ENCODE measurements at regions of chr15 and their contacts with region 1.

Region 1: DNA sequence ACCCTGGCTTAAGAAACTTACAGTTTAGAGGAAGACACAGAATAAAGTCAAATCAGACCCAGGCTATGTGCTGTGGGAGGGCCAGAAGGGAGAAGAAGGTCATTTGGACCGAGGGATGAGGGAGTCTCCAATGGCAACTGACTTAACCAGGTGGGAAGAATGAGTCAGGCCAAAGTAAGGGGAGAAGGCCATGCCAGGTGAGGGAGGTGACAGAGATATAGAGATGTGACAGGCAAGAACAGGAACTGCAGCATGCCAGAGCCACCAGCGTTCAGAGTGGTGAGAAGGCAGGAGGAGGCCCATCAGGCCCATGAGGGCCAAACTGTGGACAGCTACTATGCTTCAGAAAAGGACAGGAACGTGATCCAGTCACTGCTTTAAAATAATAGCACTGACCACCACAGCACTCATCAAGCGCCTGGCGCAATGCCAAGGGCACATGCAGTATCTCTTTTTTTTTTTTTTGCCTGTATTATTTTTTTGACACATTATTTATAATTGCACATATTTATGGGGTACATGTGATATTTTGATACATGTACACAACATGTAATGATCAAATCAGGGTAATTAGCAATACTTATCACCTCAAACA is 154.3 kb upstream of the IGF1R start:
- DNase-seq: no peak
- H3K4me3 ChIP-seq: no peak overlapping the region
- H3K27ac ChIP-seq: no peak overlapping the region
- H3K4me1 ChIP-seq: no peaks in the 10 kb centered on the region
- CTCF ChIP-seq: no peak

Region 2: GRCh38 chr15:97463696-97464095 is 1030.3 kb before region 1 on chr15:
- CTCF ChIA-PET with region 1: no interaction called
- POLR2A ChIA-PET with region 1: no interaction called
- intact Hi-C with region 1: no loop called
- DNase-seq: no peak
- H3K4me3 ChIP-seq: no peak overlapping the region
- H3K27ac ChIP-seq: no peak overlapping the region
- H3K4me1 ChIP-seq: no peaks in the 10 kb centered on the region
- CTCF ChIP-seq: no peak

Region 3: DNA sequence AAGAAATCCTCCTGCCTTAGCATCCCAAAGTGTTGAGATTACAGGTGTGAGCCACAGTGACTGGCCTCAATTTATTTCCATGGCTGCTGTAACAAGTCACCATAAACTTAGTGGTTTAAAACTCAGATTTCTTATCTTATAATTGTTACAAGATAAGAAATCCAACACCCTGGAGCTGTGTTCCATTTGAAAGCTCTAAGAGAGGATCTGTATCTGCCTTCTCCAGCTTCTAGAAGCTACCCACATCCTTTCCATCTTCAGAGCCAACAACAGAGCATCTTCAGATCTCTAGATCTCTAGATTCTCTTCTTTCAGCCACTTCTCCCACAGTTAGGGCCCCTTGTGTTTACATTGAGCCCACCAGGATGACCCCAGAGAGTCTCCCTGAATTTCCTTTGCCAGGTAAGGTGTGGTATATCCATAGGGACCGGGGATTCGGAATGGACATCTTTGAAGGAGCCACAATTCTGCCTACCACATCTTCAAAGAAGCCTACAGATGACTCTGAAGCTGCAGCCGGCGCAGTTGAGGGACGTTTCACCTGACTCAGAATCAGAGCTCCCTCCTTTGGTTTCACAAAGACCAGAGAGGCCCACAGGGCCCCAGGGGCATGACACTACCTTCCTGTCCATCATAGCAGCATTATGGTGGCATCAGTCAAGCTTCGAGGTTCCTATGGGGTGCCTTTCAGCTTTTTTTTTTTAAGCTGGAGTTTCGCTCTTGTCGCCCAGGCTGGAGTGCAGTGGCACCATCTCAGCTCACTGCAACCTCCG is 67.3 kb after region 1 on chr15:
- CTCF ChIA-PET with region 1: no interaction called
- POLR2A ChIA-PET with region 1: interaction called, 13 read pairs
- intact Hi-C with region 1: no loop called
- DNase-seq: no peak
- H3K4me3 ChIP-seq: no peak overlapping the region
- H3K27ac ChIP-seq: no peak overlapping the region
- H3K4me1 ChIP-seq: no peaks in the 10 kb centered on the region
- CTCF ChIP-seq: no peak

Region 4: GRCh38 chr15:98800437-98801233 is 306.6 kb after region 1 on chr15:
- CTCF ChIA-PET with region 1: no interaction called
- POLR2A ChIA-PET with region 1: no interaction called
- intact Hi-C with region 1: no loop called
- DNase-seq: no peak
- H3K4me3 ChIP-seq: no peak overlapping the region
- H3K27ac ChIP-seq: no peak overlapping the region
- H3K4me1 ChIP-seq: no peaks in the 10 kb centered on the region
- CTCF ChIP-seq: no peak

Region 5: GRCh38 chr15:98827217-98827616 is 333.2 kb after region 1 on chr15:
- CTCF ChIA-PET with region 1: no interaction called
- POLR2A ChIA-PET with region 1: no interaction called
- intact Hi-C with region 1: no loop called
- DNase-seq: no peak
- H3K4me3 ChIP-seq: no peak overlapping the region
- H3K27ac ChIP-seq: no peak overlapping the region
- H3K4me1 ChIP-seq: no peaks in the 10 kb centered on the region
- CTCF ChIP-seq: no peak

Measured in OCI-LY7 (cell line).